Esophagus squamous epithelium (tissue), 5 donors: ENCODE measurements at regions of chr2 and their contacts with region 1.

Region 1: GRCh38 chr2:227460070-227460485 is 11.9 kb upstream of the AGFG1 start:
- DNase-seq: no peak
- H3K4me3 ChIP-seq: no peak overlapping the region
- H3K27ac ChIP-seq: no peak overlapping the region
- H3K4me1 ChIP-seq: peaks cover 0 to 10% (median 10%) of the 10 kb centered on the region in 3 donors
- H3K27me3 ChIP-seq: no peaks in the 10 kb centered on the region
- CTCF ChIP-seq: no peak
- POLR2A ChIP-seq: no peak

Region 2: DNA sequence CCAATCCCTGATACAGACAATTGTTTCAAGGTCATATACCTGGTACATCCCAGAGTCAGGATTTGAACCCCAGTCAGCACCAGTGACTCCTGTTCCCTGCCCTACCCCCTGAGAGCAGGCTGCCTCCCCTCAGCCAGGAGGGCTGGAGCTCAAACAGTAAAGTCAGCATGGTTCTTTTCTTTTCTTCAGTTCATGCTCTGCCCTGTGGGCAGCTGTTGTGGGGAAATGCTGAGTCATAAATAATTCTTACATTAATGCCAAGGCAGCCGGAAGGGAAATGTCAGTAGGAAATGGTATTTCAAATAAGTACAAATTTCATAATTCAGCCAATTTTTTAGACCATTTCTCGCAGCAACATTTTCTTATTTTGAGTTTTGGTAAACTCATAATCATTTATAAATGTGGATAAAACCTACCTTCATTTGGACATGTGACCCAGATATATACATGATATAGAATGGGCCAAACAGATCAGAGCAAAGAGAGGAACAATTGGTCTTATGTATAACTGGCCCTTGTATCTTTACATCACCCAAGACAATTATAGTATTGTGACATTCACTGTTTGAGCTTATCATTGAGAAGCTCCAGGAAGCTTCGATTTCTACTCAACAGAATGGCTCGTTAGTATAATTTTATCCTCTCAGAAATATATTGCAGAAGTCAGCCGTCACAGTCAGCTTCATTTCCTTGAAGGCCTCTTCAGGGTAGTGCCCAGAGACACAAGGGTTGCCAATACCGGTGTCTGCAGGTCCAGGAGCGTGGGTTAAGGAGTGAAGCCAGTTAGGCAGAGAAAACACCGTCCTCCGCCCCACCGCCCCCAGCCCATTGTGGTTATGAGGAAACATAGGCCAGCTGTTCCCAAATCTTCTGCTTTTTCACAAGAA is 44.3 kb before region 1 on chr2:
- intact Hi-C with region 1: loop called (anchors 5 kb)
- DNase-seq: no peak
- H3K4me3 ChIP-seq: no peak overlapping the region
- H3K27ac ChIP-seq: peak overlapping the region; percentile 33 to 81 (median 63)
- H3K4me1 ChIP-seq: peaks cover 8 to 55% (median 35%) of the 10 kb centered on the region in 3 donors
- H3K27me3 ChIP-seq: no peaks in the 10 kb centered on the region
- CTCF ChIP-seq: no peak
- POLR2A ChIP-seq: no peak